Activated naive CD4-positive, alpha-beta T cell treated with anti-CD3 and anti-CD28 coated beads for 36 hours (primary cell): ENCODE measurements at regions of chr2 and their contacts with region 1.

Region 1: DNA sequence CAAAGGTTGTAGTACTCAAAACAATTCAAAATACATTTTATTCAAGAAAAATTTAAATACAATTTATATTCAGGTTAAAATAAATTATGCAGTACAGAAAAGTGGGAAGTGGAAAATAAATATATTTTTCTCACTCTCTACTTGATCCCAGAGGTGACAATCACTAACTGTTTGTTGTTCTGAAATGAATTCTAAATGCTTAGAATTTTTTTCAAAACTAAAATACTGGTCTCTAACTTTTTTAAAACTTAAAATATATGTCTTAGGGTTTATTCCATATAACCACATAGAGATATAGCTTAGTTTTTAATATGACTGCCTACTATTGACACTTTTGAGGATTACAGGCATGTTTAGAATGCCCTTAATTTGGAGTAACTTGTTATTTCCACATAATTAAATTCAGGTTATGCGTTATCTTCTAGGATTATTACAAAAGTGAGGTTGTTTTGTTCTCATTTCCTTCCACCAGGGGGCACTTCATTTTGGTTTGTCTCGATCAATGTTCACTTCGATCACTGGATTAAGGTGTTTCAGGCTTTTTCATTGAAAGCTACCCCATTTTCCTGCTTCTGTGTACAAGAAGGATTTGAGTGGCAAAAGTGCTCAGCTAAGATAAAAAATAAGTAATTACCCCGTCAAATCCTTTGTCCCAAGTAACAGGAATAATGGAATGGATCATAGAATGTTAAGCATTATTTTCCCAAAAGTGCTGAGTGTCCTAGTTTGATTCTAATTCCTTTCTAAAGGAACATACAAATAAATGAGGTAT is 27.1 kb upstream of the TFPI start:
- DNase-seq: peak; percentile 39
- H3K4me3 Mint-ChIP-seq: no peak overlapping the region
- H3K27ac Mint-ChIP-seq: no peak overlapping the region
- H3K4me1 Mint-ChIP-seq: peaks cover 6% of the 10 kb centered on the region
- H3K27me3 Mint-ChIP-seq: peaks cover 11% of the 10 kb centered on the region

Region 2: GRCh38 chr2:186862869-186863709 is 718.2 kb before region 1 on chr2:
- CTCF ChIA-PET with region 1: no interaction called
- intact Hi-C with region 1: loop called (anchors 1 kb)
- DNase-seq: no peak
- H3K4me3 Mint-ChIP-seq: no peak overlapping the region
- H3K27ac Mint-ChIP-seq: no peak overlapping the region
- H3K4me1 Mint-ChIP-seq: no peaks in the 10 kb centered on the region
- H3K27me3 Mint-ChIP-seq: peaks cover 2% of the 10 kb centered on the region

Region 3: DNA sequence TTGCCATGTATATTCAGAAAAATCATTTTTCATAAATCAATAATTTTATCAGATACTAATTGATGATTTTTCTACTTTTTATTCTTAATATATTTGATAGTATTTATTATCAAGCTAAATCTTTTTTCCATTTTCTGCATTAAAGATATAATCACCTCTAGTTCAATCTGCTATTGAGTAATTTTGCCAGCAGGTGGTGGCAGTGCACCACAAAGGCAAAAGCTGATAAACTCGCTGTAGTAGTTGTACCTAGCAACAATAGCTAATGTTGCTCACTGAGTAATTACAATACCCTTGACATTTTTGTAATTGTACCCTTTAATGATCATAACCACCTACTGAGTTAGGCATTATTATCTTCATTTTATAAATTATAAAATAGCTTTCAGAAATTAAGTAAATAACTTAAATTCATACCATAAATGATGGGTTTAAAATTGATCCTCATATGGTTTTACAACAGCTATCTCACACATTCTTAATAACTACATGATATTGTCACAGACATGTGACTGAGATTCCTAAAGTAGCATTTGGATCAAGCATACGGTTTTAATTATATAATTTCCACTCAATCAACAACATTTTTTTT is 81.3 kb before region 1 on chr2:
- CTCF ChIA-PET with region 1: interaction called, 89 read pairs
- intact Hi-C with region 1: loop called (anchors 1 kb)
- DNase-seq: peak; percentile 75
- H3K4me3 Mint-ChIP-seq: no peak overlapping the region
- H3K27ac Mint-ChIP-seq: no peak overlapping the region
- H3K4me1 Mint-ChIP-seq: peaks cover 4% of the 10 kb centered on the region
- H3K27me3 Mint-ChIP-seq: peaks cover 4% of the 10 kb centered on the region

Region 4: GRCh38 chr2:188024811-188025210 is 443.5 kb after region 1 on chr2:
- CTCF ChIA-PET with region 1: no interaction called
- intact Hi-C with region 1: no loop called
- DNase-seq: no peak
- H3K4me3 Mint-ChIP-seq: no peak overlapping the region
- H3K27ac Mint-ChIP-seq: no peak overlapping the region
- H3K4me1 Mint-ChIP-seq: no peaks in the 10 kb centered on the region
- H3K27me3 Mint-ChIP-seq: peaks cover 4% of the 10 kb centered on the region

Region 5: GRCh38 chr2:188076149-188077056 is 495.1 kb after region 1 on chr2:
- CTCF ChIA-PET with region 1: no interaction called
- intact Hi-C with region 1: loop called (anchors 1 kb)
- DNase-seq: no peak
- H3K4me3 Mint-ChIP-seq: no peak overlapping the region
- H3K27ac Mint-ChIP-seq: no peak overlapping the region
- H3K4me1 Mint-ChIP-seq: peaks cover 3% of the 10 kb centered on the region
- H3K27me3 Mint-ChIP-seq: no peaks in the 10 kb centered on the region

Region 6: DNA sequence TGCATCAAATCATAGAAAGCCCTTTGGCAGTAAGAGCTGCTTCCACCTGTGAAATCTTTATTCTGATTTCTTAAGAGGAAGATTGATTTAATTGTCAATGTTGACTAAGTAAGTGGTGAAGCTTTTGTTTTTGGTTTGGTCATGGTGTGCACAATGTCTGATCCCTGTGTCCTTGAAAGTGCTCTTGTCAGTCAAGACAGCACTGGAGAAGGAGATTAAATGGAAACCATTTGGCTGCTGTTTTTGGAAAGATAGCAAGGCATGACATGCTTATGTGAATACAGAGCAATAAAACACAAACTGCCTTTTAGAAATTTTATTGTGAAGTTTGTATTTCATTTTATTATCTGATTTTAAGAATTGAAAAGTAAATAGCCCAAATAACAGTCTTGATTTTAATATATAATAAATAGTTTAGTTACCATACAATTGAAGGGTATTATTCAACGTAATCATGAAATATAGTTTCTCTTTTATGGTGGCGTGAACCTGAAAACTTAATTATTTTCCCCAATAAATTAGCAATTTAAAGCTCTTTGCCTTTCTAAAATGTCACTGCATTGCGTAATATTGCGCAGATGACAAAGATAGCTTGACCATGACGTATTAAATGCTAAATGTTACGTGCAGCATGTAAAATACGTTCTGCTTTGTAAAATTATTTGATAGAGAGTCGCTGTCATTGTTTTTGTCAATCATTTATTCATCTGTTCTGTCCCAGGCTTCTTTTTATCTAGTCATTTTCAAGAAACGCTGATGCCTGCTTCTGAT is 779.4 kb after region 1 on chr2:
- CTCF ChIA-PET with region 1: no interaction called
- intact Hi-C with region 1: no loop called
- DNase-seq: no peak
- H3K4me3 Mint-ChIP-seq: no peak overlapping the region
- H3K27ac Mint-ChIP-seq: no peak overlapping the region
- H3K4me1 Mint-ChIP-seq: no peaks in the 10 kb centered on the region
- H3K27me3 Mint-ChIP-seq: peaks cover 3% of the 10 kb centered on the region

Region 7: GRCh38 chr2:188512456-188512855 is 931.1 kb after region 1 on chr2:
- CTCF ChIA-PET with region 1: no interaction called
- intact Hi-C with region 1: loop called (anchors 1 kb)
- DNase-seq: no peak
- H3K4me3 Mint-ChIP-seq: no peak overlapping the region
- H3K27ac Mint-ChIP-seq: no peak overlapping the region
- H3K4me1 Mint-ChIP-seq: no peaks in the 10 kb centered on the region
- H3K27me3 Mint-ChIP-seq: no peaks in the 10 kb centered on the region